K562 (cell line): ENCODE measurements at regions of chr5 and their contacts with region 1.

Region 1: GRCh38 chr5:120457839-120458507 is 6.1 kb upstream of the PRR16 start:
- DNase-seq: peak in 2 of 4 experiments; percentile 12 to 71
- ATAC-seq: peak; percentile 89
- H3K4me3 ChIP-seq: 0 out of 2 replicates have a peak overlapping the region, but pooled peaks have one; percentile 15
- H3K27ac ChIP-seq: no peak overlapping the region
- H3K4me1 ChIP-seq: no peaks in the 10 kb centered on the region
- H3K27me3 ChIP-seq: no peaks in the 10 kb centered on the region
- CTCF ChIP-seq: peak; percentile 50 to 66 (median 51); a peak in 5 of 6 replicates
- EP300 ChIP-seq: no peak
- POLR2A ChIP-seq: no peak
- RAD21 ChIP-seq: peak; percentile 81 to 84

Region 2: DNA sequence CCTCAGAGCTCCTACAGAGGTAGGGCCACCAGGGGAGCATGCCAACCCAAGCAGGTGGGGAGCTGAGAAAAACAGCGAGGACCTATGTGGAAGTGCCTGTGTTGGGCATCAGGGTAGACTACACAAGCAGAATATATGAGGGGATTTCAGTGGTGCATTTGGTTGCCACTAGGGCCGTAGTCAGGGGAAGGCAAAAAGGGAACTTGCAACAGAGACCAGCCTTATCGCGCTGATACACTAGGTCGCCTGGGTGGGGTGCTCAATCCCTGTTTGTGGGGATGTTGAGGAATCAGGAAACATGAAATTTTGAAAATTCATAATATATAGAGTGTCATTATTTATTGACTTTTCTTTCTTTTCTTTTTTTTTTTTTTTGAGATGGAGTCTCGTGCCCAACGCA is 364.8 kb before region 1 on chr5:
- CTCF ChIA-PET with region 1: no interaction called
- POLR2A ChIA-PET with region 1: no interaction called
- in situ Hi-C with region 1: no loop called
- intact Hi-C with region 1: loop called (anchors 5 kb)
- DNase-seq: peak in 1 of 4 experiments; percentile 12
- ATAC-seq: no peak
- H3K4me3 ChIP-seq: no peak overlapping the region
- H3K27ac ChIP-seq: no peak overlapping the region
- H3K4me1 ChIP-seq: no peaks in the 10 kb centered on the region
- H3K27me3 ChIP-seq: no peaks in the 10 kb centered on the region
- CTCF ChIP-seq: peak in 1 of 3 experiments; percentile 35; a peak in 2 of 6 replicates
- EP300 ChIP-seq: no peak
- POLR2A ChIP-seq: no peak
- RAD21 ChIP-seq: peak; percentile 20 to 44

Region 3: DNA sequence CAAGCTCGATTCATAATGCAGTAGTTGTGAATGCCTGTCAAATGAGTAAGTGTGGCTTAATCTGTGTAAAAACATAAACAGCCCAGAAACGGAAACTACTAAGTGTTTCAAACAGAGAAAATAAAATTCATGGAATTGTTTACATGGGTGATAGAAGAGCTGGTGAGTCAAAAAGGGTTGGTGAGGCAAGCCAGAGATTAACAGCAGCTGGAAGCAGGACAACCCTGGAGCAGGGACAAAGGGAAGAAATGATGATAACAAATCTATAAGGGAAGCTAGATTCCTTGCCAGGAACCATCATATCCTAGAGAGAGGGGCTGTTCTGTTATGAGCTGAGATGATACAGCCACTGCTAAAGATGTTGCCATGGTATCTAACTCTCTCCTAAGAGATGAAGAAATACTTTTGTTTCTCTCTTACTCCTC is 11.9 kb before region 1 on chr5:
- CTCF ChIA-PET with region 1: no interaction called
- POLR2A ChIA-PET with region 1: no interaction called
- in situ Hi-C with region 1: no loop called
- intact Hi-C with region 1: no loop called
- DNase-seq: no peak
- ATAC-seq: no peak
- H3K4me3 ChIP-seq: no peak overlapping the region
- H3K27ac ChIP-seq: no peak overlapping the region
- H3K4me1 ChIP-seq: no peaks in the 10 kb centered on the region
- H3K27me3 ChIP-seq: no peaks in the 10 kb centered on the region
- CTCF ChIP-seq: no peak
- EP300 ChIP-seq: no peak
- POLR2A ChIP-seq: no peak
- RAD21 ChIP-seq: no peak

Region 4: DNA sequence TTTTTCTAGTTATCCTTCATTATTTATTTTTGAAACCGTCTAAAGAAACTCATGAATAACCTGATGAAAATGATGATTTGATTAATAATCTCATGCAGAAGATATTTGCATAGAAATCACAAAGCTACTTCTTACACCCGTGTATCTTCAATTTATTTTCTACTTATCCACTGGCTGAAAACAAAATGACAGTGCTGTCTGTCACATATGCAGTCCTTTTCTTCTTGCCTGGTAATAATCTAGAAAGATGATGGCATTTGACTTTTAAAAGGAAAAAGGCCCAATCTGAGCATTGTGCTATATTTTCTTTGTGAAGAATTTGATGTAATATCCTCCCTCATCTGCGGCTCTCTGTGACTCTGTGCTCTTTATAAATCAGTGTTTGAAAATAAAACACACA is 259.4 kb after region 1 on chr5:
- CTCF ChIA-PET with region 1: no interaction called
- POLR2A ChIA-PET with region 1: no interaction called
- in situ Hi-C with region 1: no loop called
- intact Hi-C with region 1: no loop called
- DNase-seq: no peak
- ATAC-seq: no peak
- H3K4me3 ChIP-seq: no peak overlapping the region
- H3K27ac ChIP-seq: no peak overlapping the region
- H3K4me1 ChIP-seq: no peaks in the 10 kb centered on the region
- H3K27me3 ChIP-seq: no peaks in the 10 kb centered on the region
- CTCF ChIP-seq: no peak
- EP300 ChIP-seq: no peak
- POLR2A ChIP-seq: no peak
- RAD21 ChIP-seq: no peak